ENCODE measurements at regions of chr11 and their contacts with region 1.

Region 1: GRCh38 chr11:86047275-86047991 is 21.5 kb downstream of the PICALM start:
- DNase-seq: peak; percentile 81
- H3K4me3 Mint-ChIP-seq: peak overlapping the region; percentile 60
- H3K27ac Mint-ChIP-seq: peak overlapping the region; percentile 99
- H3K4me1 Mint-ChIP-seq: peaks cover 93% of the 10 kb centered on the region
- H3K27me3 Mint-ChIP-seq: no peaks in the 10 kb centered on the region

Region 2: GRCh38 chr11:86021377-86021776 is 26.1 kb before region 1 on chr11:
- CTCF ChIA-PET with region 1: interaction called, 8 read pairs
- POLR2A ChIA-PET with region 1: no interaction called
- intact Hi-C with region 1: loop called (anchors 2 kb)
- DNase-seq: no peak
- H3K4me3 Mint-ChIP-seq: no peak overlapping the region
- H3K27ac Mint-ChIP-seq: peak overlapping the region; percentile 33
- H3K4me1 Mint-ChIP-seq: peaks cover 46% of the 10 kb centered on the region
- H3K27me3 Mint-ChIP-seq: no peaks in the 10 kb centered on the region

Region 3: GRCh38 chr11:86116386-86116726 is 68.9 kb after region 1 on chr11:
- CTCF ChIA-PET with region 1: no interaction called
- POLR2A ChIA-PET with region 1: interaction called, 5 read pairs
- intact Hi-C with region 1: loop called (anchors 5 kb)
- DNase-seq: peak; percentile 59
- H3K4me3 Mint-ChIP-seq: peak overlapping the region; percentile 40
- H3K27ac Mint-ChIP-seq: peak overlapping the region; percentile 44
- H3K4me1 Mint-ChIP-seq: peaks cover 34% of the 10 kb centered on the region
- H3K27me3 Mint-ChIP-seq: peaks cover 2% of the 10 kb centered on the region

Region 4: DNA sequence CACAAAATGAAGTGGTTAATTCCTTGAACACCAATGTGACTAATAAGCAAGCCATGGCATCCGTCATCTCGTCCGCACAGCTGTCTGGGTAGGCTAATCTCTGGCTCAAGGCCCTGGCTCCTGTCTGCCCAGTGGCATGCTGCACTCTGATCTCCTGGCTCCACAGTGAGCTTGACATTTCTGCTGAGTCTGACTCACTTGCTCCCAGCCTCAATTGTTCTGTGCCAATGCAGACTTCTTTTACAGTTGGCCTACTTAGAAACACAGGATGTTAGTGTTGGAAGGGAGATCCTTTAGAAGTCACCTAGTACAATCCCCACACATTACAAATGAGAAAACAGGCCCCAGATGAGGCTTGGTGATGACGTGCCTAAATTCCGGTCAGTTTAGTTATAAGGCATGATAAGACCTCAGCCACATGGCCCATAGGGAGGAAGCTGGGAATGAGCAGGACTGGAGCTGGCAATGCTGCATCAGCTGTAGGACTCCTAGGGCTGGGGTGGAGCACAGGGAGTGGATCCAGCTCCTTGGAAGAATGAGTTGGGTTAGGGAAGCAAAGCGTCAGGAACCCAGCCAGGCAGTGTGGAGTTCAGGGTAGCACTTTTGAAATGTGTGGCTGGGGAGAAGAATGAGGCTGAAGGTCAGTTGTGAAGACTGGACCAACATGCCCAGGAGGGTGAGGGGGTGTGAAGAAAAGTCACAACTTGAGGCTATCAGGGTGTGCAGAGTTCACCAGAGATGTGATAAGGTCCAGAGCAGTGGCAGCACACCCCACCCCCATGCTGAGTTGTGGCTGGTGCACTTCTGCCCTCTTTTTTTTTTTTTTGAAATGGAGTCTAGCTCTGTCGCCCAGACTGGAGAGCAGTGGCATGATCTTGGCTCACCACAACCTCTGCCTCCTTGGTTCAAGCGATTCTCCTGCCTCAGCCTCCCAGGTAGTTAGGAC is 126.9 kb after region 1 on chr11:
- CTCF ChIA-PET with region 1: interaction called, 10 read pairs
- POLR2A ChIA-PET with region 1: no interaction called
- intact Hi-C with region 1: loop called (anchors 1 kb)
- DNase-seq: peak; percentile 36
- H3K4me3 Mint-ChIP-seq: no peak overlapping the region
- H3K27ac Mint-ChIP-seq: no peak overlapping the region
- H3K4me1 Mint-ChIP-seq: peaks cover 28% of the 10 kb centered on the region
- H3K27me3 Mint-ChIP-seq: no peaks in the 10 kb centered on the region

Region 5: DNA sequence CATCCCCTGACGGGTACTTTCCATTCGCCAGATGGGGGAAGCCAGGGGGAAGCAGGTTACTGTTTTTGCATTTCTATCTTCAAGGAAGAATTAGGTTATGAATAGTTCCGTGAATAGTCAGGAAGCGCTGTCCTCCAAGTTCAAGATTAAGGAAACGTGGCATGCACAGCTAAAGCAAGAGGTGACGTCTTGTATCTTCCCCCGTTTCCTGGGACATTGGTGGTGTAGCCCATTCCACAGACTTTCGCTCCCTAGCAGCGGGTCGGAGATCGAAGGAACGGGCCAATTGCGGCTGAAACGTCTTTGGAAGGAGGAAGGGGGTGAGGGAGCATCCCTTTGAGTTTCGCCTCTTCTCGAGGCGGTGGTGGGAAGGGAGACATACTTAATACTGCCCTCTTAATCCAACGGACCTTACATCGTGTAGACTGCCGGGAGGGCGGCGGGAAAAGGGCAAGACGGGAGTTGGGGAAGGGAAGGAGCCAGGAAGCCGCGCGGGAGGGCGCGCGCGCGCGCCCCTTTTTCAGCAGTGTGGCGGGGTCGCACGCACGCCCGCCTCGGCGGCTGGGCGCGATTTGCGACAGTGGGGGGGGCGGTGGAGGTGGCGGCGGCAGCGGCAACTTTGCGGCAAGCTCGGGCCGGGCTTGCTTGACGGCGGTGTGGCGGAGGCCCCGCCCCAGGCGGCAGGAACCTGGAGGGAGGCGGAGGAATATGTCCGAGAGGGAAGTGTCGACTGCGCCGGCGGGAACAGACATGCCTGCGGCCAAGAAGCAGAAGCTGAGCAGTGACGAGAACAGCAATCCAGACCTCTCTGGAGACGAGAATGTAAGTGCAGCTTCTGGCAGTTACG is 197.3 kb after region 1 on chr11 and contains the start of gene EED:
- CTCF ChIA-PET with region 1: interaction called, 3 read pairs
- POLR2A ChIA-PET with region 1: interaction called, 5 read pairs
- intact Hi-C with region 1: loop called (anchors 1 kb)
- DNase-seq: peak; percentile 96
- H3K4me3 Mint-ChIP-seq: no peak within 1 kb of the TSS
- H3K27ac Mint-ChIP-seq: no peak within 1 kb of the TSS
- H3K4me1 Mint-ChIP-seq: peaks cover 33% of the 10 kb centered on the region
- H3K27me3 Mint-ChIP-seq: no peaks in the 10 kb centered on the region
- total RNA-seq, gene EED: 170 TPM